Activated CD8-positive, alpha-beta T cell treated with anti-CD3 and anti-CD28 coated beads, Interleukin-2, amount 10 ng/mL, durations not matched to agents 7 days and 5 days (primary cell): ENCODE measurements at regions of chr6 and their contacts with region 1.

Region 1: DNA sequence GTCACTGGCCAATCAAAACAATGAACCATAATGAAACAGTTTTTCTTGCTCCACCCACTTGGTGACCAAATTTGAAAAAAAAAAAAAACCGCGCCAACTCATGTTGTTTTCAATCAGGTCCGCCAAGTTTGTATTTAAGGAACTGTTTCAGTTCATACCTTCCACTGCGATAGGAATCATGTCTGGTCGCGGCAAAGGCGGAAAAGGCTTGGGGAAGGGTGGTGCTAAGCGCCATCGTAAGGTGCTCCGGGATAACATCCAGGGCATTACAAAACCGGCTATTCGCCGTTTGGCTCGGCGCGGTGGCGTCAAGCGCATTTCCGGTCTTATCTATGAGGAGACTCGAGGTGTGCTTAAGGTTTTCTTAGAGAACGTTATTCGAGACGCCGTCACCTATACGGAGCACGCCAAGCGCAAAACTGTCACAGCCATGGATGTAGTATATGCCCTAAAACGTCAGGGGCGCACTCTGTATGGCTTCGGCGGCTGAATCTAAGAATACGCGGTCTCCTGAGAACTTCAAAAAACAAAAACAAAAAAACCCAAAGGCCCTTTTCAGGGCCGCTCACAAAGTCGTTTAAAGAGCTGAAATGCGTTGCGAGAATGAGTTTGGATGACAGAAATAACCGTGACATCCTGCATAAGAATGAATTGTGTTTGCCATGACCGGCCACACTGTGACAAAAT is 16.7 kb downstream of the HFE start:
- DNase-seq: peak; percentile 93
- ATAC-seq: peak; percentile 89
- H3K4me3 Mint-ChIP-seq: peak overlapping the region; percentile 85
- H3K27ac Mint-ChIP-seq: peak overlapping the region; percentile 98
- H3K4me1 Mint-ChIP-seq: peaks cover 26% of the 10 kb centered on the region
- H3K27me3 Mint-ChIP-seq: peaks cover 2% of the 10 kb centered on the region

Region 2: GRCh38 chr6:26087284-26088115 is 16.4 kb before region 1 on chr6 and contains the start of gene HFE:
- CTCF ChIA-PET with region 1: interaction called, 7 read pairs
- POLR2A ChIA-PET with region 1: interaction called, 21 read pairs
- DNase-seq: peak; percentile 50
- ATAC-seq: peak; percentile 48
- H3K4me3 Mint-ChIP-seq: peak within 1 kb of the TSS; percentile 80
- H3K27ac Mint-ChIP-seq: peak within 1 kb of the TSS; percentile 70
- H3K4me1 Mint-ChIP-seq: peaks cover 60% of the 10 kb centered on the region
- H3K27me3 Mint-ChIP-seq: peaks cover 1% of the 10 kb centered on the region
- total RNA-seq, gene HFE: 4.3 TPM

Region 3: DNA sequence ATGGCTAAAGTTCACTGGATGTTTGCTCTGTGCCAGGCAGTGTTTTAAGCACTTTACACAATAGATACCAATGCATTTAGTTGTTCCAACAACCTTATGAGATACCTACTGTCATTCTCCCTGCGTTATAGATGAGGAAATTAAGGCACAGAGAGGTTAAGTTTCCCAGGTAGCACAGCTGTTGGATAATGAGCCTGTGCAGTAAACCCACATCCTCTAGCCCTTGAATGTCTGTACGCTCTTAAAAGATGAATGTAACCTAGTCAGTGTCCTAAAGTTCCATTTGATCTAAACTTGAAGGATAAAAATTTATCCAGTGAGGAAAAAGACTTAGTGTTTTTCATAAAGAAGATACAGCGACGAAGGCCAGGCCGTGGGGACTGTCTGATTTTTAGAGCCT is 11.3 kb after region 1 on chr6:
- CTCF ChIA-PET with region 1: interaction called, 4 read pairs
- POLR2A ChIA-PET with region 1: interaction called, 45 read pairs
- DNase-seq: no peak
- ATAC-seq: peak; percentile 46
- H3K4me3 Mint-ChIP-seq: no peak overlapping the region
- H3K27ac Mint-ChIP-seq: peak overlapping the region; percentile 62
- H3K4me1 Mint-ChIP-seq: peaks cover 24% of the 10 kb centered on the region
- H3K27me3 Mint-ChIP-seq: no peaks in the 10 kb centered on the region